Naive thymus-derived CD4-positive, alpha-beta T cell (primary cell): ENCODE measurements at regions of chr6 and their contacts with region 1.

Region 1: DNA sequence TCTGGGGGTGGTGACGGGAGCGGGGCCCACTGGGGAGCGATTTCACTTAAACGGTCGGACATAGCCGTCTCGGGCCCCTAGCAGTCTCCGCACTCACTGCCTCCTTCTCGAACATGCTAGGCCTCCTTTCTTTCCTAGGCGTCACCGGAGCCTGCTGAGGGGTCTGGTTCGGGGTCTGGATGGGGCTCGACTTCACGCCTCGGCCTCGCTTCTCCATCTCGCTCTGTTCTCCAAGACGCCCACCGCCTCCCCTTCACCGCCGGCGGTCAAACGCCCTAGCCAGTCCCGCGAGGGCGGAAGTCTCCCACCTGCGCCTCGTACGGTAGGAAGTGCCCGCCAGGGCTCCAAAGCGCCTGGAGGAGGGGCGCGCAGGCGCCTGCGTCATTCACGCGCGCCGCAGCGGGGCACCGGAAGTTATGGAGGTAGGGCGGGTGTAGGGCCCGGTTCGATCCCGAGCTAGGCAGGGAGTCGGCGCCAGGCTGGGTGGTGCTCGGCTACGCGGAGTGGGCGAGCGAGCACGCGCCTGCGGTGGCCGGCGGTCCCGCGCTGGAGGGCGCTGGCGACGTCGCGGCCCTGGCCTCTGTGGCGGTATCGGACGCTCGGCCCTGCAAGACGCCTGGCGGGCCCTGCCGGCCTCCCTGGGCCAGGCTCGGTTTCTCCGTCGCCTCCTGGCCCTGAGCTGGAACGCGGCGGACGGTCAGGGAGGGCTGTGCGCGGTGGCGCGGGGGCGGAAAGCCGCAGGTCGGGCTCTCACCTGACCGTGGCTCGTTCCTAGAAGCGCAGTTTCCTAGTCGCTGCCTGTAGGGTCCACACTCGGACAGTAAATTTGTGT is at the starts of genes DYNLT2 and ERMARD:
- DNase-seq: peak; percentile 89 to 97 (median 94)
- ATAC-seq: peak; percentile 98
- H3K4me3 ChIP-seq: peak within 1 kb of the TSS; percentile 84
- H3K4me3 Mint-ChIP-seq: peak within 1 kb of the TSS; percentile 92 to 100 (median 98)
- H3K27ac ChIP-seq: peak within 1 kb of the TSS; percentile 92
- H3K27ac Mint-ChIP-seq: peak within 1 kb of the TSS; percentile 96 to 100 (median 100)
- H3K4me1 ChIP-seq: peaks cover 17% of the 10 kb centered on the region in 2 donors
- H3K4me1 Mint-ChIP-seq: peaks cover 21 to 43% (median 37%) of the 10 kb centered on the region in 7 donors
- H3K27me3 ChIP-seq: no peaks in the 10 kb centered on the region
- H3K27me3 Mint-ChIP-seq: peaks cover 0 to 4% (median 0%) of the 10 kb centered on the region in 5 donors
- total RNA-seq, gene DYNLT2: 2.5 to 4.7 (median 4.1) TPM
- total RNA-seq, gene ERMARD: 30.3 to 43.7 (median 35.7) TPM

Region 2: DNA sequence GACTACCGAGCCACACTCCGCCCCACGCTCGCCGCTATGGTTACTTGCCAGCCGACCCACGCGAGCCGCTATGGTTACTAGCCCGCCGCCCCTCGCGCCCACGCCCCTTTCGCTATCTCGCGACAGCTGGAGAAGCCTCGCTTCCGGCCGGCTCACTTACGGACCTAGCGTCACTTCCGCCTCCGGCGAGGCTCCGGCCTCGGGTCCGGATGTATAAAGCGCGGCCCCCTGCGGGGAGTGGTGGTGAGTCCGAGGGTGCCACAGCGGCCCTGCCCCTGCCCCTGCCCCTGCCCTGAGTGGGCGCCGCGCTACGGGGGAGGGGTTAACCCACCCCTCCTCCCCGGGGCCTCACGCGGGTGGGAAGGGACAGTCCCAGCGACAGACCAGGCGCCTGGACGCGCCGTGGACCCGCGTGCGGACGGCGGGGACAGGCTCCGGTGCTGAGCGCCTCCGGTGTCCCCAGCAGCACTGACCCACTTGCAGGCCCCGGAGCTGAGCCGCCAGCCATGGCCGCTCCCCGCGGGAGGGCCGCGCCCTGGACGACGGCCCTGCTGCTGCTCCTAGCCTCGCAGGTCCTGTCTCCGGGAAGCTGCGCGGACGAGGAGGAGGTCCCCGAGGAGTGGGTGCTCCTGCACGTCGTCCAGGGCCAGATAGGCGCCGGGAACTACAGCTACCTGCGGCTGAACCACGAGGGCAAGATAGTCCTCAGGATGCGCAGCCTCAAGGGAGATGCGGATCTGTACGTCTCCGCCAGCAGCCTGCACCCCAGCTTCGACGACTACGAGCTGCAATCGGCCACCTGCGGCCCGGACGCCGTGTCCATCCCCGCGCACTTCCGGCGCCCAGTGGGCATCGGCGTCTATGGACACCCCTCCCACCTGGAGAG is 49.3 kb before region 1 on chr6 and contains the starts of genes C6orf120 and WDR27:
- CTCF ChIA-PET with region 1: no interaction called
- POLR2A ChIA-PET with region 1: interaction called, 44 read pairs
- intact Hi-C with region 1: loop called (anchors 1 kb)
- DNase-seq: peak; percentile 91 to 98 (median 94)
- ATAC-seq: peak; percentile 93
- H3K4me3 ChIP-seq: peak within 1 kb of the TSS; percentile 95
- H3K4me3 Mint-ChIP-seq: peak within 1 kb of the TSS; percentile 89 to 94 (median 92)
- H3K27ac ChIP-seq: peak within 1 kb of the TSS; percentile 98
- H3K27ac Mint-ChIP-seq: peak within 1 kb of the TSS; percentile 88 to 96 (median 93)
- H3K4me1 ChIP-seq: peaks cover 22 to 36% of the 10 kb centered on the region in 2 donors
- H3K4me1 Mint-ChIP-seq: peaks cover 28 to 66% (median 55%) of the 10 kb centered on the region in 7 donors
- H3K27me3 ChIP-seq: no peaks in the 10 kb centered on the region
- H3K27me3 Mint-ChIP-seq: no peaks in the 10 kb centered on the region
- total RNA-seq, gene C6orf120: 16.0 to 38.1 (median 19.3) TPM
- total RNA-seq, gene WDR27: 22.7 to 89.0 (median 41.4) TPM

Region 3: DNA sequence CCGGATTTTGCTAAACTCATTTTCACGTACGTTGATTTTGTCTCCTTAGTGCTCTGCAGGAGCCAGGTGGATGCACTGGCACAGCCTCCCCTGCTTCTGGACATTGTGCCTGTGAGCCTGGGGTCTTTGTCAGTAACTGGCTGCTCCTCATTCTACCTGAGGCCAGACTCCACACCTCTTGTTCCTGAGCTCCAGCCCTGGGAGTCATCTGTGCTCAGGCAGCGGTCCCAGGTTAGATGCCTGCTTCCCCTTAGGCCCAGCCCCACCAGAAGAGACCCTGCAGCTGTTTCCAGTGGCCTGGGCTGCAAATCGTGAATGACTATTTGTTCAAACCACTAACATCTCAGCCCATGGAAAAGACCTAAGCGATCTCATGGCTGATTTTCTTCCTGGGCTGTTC is 129.1 kb after region 1 on chr6:
- CTCF ChIA-PET with region 1: no interaction called
- POLR2A ChIA-PET with region 1: no interaction called
- intact Hi-C with region 1: no loop called
- DNase-seq: no peak
- ATAC-seq: no peak
- H3K4me3 ChIP-seq: no peak overlapping the region
- H3K4me3 Mint-ChIP-seq: no peak overlapping the region
- H3K27ac ChIP-seq: no peak overlapping the region
- H3K27ac Mint-ChIP-seq: no peak overlapping the region
- H3K4me1 ChIP-seq: no peaks in the 10 kb centered on the region
- H3K4me1 Mint-ChIP-seq: peaks cover 0 to 2% (median 0%) of the 10 kb centered on the region in 7 donors
- H3K27me3 ChIP-seq: no peaks in the 10 kb centered on the region
- H3K27me3 Mint-ChIP-seq: peaks cover 21 to 67% (median 36%) of the 10 kb centered on the region in 5 donors